ENCODE measurements at regions of chr18 and their contacts with region 1.

Region 1: DNA sequence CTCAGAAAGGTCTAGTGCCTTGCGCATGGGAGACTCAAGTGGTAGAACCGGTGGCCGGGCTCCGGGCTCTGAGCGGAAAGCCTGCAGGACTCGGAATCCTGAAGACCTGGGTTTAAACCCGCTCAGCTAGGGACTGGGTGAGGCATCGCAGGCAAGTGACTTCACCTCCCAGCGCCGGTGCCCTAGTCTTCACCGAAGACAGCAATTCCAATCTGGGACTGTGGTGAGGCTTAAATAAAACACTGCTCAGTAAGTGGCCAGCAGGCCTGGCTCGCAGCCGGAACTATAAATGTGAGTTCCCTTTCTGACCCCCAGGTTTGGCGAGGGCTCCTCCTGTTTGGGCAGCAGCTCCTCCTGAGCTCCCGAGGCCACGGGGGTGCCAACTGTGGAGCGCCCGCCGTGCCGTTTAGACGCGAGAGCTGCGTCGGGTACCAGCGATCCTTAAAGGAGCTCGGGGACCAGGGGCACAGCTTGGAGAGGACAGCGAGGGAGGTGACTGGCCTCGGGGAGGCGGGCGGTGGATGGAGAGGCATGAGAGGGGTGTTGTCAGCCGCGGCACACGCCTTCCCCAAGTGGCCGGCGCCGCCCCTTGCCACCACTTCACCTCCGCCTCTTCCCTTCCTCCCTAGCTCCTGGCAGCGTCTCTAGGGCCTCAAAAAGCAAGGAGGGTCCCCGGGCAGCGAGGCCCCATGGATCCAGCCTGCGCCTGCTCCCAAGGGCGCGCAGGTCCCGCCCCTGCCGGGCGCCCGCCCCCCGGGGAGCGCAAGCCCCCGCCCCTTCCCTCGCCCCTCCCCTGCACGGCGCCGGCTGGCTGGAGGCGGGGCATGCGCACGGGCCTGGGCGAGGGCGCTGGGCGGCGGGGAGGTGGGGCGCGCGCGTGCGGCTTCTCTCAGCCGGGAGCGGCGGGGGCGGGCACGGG is 736 bp upstream of the MTCL1 start:
- DNase-seq: peak; percentile 88
- ATAC-seq: peak; percentile 88
- H3K4me3 ChIP-seq: peak overlapping the region; percentile 93
- H3K27ac ChIP-seq: peak overlapping the region; percentile 91
- H3K4me1 ChIP-seq: peaks cover 26% of the 10 kb centered on the region
- H3K27me3 ChIP-seq: no peaks in the 10 kb centered on the region
- CTCF ChIP-seq: no peak
- POLR2A ChIP-seq: 0 out of 2 replicates have a peak, but pooled peaks have one; percentile 36
- RAD21 ChIP-seq: no peak

Region 2: DNA sequence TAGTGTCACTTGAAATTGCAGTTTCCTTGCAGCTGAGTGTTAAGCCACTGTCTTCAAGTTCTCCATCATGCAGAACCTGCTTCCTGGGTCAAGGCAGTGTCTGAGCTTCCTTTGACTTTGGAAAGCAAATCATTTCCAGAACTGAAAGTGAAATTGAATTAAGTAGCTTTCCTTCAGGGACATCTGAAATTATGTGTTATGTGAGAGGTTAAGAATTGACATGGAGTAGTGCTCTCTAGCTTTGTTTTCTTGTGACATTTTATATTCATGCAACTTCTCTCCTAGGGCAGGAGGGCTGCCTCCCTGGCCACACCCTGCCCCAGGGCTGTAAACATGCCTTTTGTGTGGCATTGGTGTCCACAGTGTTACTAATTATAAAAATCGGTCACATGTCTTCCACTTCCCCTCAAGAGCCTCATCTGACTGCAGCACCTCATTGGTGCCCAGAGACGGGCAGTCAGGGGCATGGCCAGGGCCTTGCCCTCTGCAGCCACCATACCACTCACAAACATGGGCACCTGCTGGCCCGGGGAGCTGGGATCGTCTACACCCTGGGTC is 81.0 kb before region 1 on chr18:
- CTCF ChIA-PET with region 1: no interaction called
- POLR2A ChIA-PET with region 1: no interaction called
- dilution Hi-C with region 1: no loop called
- in situ Hi-C with region 1: no loop called
- intact Hi-C with region 1: no loop called
- DNase-seq: no peak
- ATAC-seq: peak; percentile 31; the same call in 1 of the 2 replicates
- H3K4me3 ChIP-seq: no peak overlapping the region
- H3K27ac ChIP-seq: no peak overlapping the region; the same call in 1 of the 2 replicates
- H3K4me1 ChIP-seq: peaks cover 7% of the 10 kb centered on the region
- H3K27me3 ChIP-seq: no peaks in the 10 kb centered on the region
- CTCF ChIP-seq: no peak
- POLR2A ChIP-seq: no peak
- RAD21 ChIP-seq: no peak

Region 3: DNA sequence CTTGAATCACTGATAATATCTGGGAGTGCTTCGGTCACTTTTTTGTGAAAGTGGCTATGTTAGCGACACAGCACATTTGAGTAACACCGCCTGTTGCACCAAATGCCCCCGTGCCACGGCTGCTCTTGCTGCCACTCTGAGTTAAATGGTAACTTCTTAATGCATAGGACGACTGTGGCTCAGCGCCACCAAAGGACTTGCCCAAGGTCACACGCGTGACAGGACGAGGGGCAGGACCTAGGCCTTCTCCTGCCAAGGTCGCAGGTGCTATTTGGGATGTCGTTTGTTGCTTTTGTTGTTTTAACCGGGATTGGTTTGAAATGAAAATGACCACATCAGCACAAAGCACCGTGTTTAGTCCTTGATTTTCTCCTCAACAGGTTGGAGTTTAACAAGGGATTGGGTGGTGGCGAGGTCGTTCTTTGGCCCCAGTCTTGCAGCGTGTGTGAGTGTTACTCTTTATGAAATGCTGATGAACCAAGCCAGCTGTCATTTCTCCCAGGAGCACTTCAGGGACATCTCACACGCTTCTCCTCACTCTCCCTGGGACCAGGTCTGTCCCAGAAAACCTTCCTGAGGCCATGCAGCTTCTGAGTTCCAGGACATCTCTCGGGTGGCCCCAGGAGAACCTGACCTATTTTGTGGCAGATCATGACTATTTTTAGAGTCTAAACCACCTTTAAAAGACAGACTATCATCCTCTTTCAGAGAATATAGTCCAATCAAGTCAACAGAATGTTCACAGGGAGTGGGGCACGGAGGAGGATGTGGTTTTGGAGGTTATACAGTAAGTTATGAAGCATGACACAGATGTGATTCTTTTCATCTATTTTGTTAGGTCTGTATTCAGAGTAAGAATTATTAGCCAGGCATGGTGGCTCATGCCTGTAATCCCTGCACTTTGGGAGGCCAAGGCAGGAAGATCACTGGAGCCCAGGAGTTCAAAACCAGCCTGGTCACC is 50.7 kb after region 1 on chr18:
- CTCF ChIA-PET with region 1: no interaction called
- POLR2A ChIA-PET with region 1: no interaction called
- dilution Hi-C with region 1: no loop called
- in situ Hi-C with region 1: no loop called
- intact Hi-C with region 1: no loop called
- DNase-seq: peak; percentile 89
- ATAC-seq: peak; percentile 33; the same call in 1 of the 2 replicates
- H3K4me3 ChIP-seq: no peak overlapping the region
- H3K27ac ChIP-seq: peak overlapping the region; percentile 65
- H3K4me1 ChIP-seq: peaks cover 48% of the 10 kb centered on the region
- H3K27me3 ChIP-seq: no peaks in the 10 kb centered on the region
- CTCF ChIP-seq: no peak
- POLR2A ChIP-seq: no peak
- RAD21 ChIP-seq: no peak

Region 4: DNA sequence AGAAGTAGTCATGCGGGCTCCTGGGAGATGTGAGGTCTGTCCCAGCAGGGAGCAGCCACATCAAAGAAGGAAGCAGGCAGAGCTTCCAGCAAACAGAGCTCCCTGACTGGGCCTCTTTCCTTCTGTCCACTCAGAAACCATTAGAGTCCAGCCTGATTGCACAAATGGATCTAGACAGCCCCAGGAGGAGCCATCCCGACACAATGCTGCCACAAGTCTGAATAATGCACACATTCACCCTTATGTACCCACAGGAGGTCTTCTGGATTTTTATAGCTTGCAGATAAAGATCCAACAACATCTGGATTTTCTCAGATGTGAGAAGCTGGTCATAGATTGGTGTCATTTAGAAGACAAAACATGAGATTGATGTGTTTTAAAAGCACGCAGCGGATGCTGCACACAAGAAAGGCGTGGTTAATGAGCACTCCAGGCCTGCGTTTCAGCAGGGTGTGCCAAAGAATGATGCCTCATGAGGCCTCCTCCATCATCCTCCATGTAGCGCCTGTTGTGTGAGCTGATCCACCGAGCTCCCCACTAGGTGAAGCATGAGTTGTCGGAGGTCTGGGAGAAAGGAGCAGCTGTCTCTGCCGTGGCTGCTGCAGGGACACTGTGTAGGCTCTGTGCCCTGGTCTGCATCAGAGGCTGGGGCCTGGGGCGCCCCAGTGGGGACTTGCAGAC is 61.3 kb after region 1 on chr18:
- CTCF ChIA-PET with region 1: no interaction called
- POLR2A ChIA-PET with region 1: no interaction called
- dilution Hi-C with region 1: no loop called
- in situ Hi-C with region 1: no loop called
- intact Hi-C with region 1: no loop called
- DNase-seq: no peak
- ATAC-seq: peak; percentile 45
- H3K4me3 ChIP-seq: no peak overlapping the region
- H3K27ac ChIP-seq: no peak overlapping the region
- H3K4me1 ChIP-seq: peaks cover 13% of the 10 kb centered on the region
- H3K27me3 ChIP-seq: no peaks in the 10 kb centered on the region
- CTCF ChIP-seq: no peak
- POLR2A ChIP-seq: no peak
- RAD21 ChIP-seq: no peak

Region 5: DNA sequence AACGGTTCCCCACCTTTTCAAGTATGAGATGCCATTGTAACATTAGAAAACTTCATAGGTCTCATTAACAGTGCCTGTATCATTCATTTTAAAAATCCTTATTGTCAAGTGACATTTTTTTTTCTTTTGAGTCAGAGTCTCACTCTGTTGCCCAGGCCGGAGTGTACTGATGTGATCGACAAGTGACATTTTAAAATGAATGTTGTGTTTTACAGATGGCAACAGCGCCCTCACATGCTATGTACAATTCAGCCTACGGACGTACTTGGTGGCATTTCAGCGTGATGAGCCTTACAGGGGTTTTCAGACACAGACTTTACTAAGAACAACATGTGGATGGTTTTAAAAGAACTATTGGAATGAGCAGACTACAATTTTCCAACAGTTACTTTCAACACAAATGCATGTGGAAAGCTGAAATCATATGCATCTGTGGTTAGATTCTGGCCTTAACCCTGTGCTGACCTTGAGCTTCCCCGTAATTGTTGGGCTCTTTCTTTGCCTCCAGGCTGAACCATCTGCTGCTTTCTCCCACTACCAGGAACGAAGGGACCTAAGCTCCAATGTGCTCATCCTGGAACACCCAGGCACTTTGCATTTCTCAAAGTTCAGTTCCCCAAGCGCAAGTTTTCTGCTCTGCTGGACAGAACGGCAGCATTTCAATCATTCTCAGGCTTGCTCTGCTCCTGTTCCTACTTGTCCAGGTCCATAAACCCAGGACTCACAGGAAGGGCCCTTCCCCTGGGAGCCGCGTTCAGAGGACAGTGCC is 278.0 kb after region 1 on chr18:
- CTCF ChIA-PET with region 1: interaction called, 5 read pairs
- POLR2A ChIA-PET with region 1: no interaction called
- dilution Hi-C with region 1: loop called (anchors 25 kb)
- in situ Hi-C with region 1: loop called (anchors 5 kb)
- intact Hi-C with region 1: no loop called
- DNase-seq: peak; percentile 74
- ATAC-seq: peak; percentile 74
- H3K4me3 ChIP-seq: no peak overlapping the region
- H3K27ac ChIP-seq: peak overlapping the region; percentile 31; the same call in 1 of the 2 replicates
- H3K4me1 ChIP-seq: peaks cover 12% of the 10 kb centered on the region
- H3K27me3 ChIP-seq: no peaks in the 10 kb centered on the region
- CTCF ChIP-seq: peak; percentile 52
- POLR2A ChIP-seq: no peak
- RAD21 ChIP-seq: peak; percentile 68

Region 6: DNA sequence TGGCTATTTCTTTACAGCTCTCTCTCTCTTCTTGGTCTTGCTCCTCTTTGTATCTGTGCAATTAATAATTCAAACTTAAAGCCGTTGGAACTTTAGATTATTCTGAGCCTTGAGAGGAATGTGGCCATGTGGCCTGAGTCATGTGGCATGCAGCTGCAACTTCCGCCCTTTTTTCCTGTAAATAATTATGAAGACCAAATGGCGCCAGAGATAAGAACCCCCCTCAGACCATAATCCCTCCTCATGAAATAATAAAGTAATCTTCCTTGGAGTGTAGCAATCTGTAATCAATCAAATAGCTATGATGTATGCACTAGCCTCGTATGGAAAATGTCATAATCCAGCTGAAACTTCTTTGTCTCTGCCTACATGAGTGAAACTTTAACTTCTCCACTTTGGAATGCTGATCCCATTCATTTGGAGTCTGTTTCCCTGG is 616.4 kb after region 1 on chr18:
- CTCF ChIA-PET with region 1: no interaction called
- POLR2A ChIA-PET with region 1: no interaction called
- dilution Hi-C with region 1: no loop called
- in situ Hi-C with region 1: no loop called
- intact Hi-C with region 1: loop called (anchors 5 kb)
- DNase-seq: peak; percentile 89
- ATAC-seq: peak; percentile 78
- H3K4me3 ChIP-seq: no peak overlapping the region
- H3K27ac ChIP-seq: peak overlapping the region; percentile 92
- H3K4me1 ChIP-seq: peaks cover 23% of the 10 kb centered on the region
- H3K27me3 ChIP-seq: no peaks in the 10 kb centered on the region
- CTCF ChIP-seq: no peak
- POLR2A ChIP-seq: no peak
- RAD21 ChIP-seq: no peak